ENCODE measurements at regions of chr22 and their contacts with region 1.

Region 1: DNA sequence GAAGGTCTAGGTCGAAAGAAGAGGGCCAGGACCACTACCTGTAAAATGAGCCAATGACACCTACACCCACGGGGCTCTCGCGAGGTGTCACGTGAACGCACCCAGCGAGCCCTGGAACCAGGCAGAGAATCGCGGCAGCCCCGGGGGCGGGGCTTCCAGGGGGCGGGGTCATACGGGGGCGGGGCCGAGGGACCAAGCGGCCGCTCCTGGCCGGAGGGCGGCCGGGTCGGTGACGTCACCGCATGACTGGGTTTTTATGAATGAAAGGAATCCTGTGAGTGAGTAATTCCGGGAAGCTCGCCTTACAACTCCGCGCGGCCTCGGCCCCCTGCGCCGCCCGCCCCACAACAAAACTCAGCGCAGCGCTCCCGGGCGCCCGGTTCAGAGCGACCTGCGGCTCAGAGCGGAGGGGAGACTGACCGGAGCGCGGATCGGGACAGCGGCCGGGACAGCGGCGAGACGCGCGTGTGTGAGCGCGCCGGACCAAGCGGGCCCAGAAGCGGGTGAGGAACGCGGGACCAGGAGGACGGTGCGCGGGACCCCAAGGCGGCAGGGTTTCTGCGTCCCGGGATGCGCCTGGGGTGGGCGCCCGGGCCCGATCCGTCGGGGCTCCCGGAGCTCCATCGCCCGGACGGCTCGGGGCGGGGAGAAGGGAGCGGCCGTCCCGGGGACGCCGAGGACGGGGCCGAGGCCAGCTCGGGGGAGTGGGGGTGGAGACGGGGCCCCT is at the start of gene MAFF:
- DNase-seq: peak; percentile 69
- ATAC-seq: peak; percentile 64
- H3K4me3 ChIP-seq: peak within 1 kb of the TSS; percentile 78
- H3K27ac ChIP-seq: peak within 1 kb of the TSS; percentile 47; the same call in 1 of the 2 replicates
- H3K4me1 ChIP-seq: peaks cover 42% of the 10 kb centered on the region
- H3K27me3 ChIP-seq: no peaks in the 10 kb centered on the region
- CTCF ChIP-seq: no peak
- EP300 ChIP-seq: no peak
- POLR2A ChIP-seq: no peak
- RAD21 ChIP-seq: no peak
- polyA plus RNA-seq, gene MAFF: 0.22 TPM in 1 of 2 experiments, not detected in the other

Region 2: GRCh38 chr22:37982938-37983859 is 218.7 kb before region 1 on chr22:
- CTCF ChIA-PET with region 1: no interaction called
- POLR2A ChIA-PET with region 1: no interaction called
- RAD21 ChIA-PET with region 1: no interaction called
- SMC1A ChIA-PET with region 1: no interaction called
- in situ Hi-C with region 1: no loop called
- intact Hi-C with region 1: no loop called
- DNase-seq: no peak
- ATAC-seq: no peak
- H3K4me3 ChIP-seq: no peak overlapping the region
- H3K27ac ChIP-seq: no peak overlapping the region
- H3K4me1 ChIP-seq: no peaks in the 10 kb centered on the region
- H3K27me3 ChIP-seq: no peaks in the 10 kb centered on the region
- CTCF ChIP-seq: no peak
- EP300 ChIP-seq: no peak
- POLR2A ChIP-seq: no peak
- RAD21 ChIP-seq: no peak

Region 3: DNA sequence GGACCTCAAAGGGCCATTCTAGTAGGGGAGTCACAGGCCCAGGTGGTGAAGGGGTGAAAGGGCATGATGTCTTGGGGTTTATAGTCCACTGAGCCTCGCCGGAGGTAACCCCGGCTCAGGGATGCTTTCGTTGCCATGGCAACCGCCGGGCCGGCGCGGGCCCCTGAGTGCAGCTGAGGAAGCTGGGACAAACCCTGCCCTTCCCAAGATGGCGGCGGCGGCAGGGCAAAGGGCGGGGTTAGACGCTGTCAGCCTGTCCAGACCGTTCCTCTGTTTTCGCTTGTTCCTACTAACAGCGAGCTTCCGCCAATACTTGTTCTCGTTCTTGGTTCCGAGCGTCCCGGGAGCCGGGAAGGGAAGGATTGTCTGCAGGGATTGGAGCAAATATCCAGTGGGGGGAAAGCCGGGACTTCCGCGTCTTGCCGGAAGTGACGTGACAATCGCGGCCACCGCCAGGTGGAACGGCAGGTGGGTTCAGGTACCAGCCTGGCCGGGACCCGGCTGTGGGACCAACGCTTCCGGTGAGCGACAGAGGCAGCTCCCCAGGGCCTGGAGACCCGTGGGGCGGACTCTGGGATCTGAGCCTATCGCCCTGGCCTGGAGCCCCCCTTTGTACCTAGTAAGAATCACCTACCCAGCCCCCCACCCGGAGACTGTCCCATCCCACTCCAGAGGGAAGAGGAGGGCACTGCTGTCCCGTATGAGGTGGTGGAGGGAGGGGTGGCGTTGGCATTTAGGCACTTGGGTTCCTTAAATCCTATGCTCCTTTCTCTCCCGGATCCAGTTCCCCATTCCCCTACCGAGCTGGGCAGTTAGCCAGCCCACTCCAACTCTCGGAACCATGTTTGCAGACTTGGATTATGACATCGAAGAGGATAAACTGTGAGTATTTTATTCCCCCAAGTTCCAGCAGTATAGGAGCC is 144.6 kb before region 1 on chr22 and contains the start of gene PICK1:
- CTCF ChIA-PET with region 1: interaction called, 3 read pairs
- POLR2A ChIA-PET with region 1: no interaction called
- RAD21 ChIA-PET with region 1: no interaction called
- SMC1A ChIA-PET with region 1: interaction called, 3 read pairs
- in situ Hi-C with region 1: no loop called
- intact Hi-C with region 1: loop called (anchors 5 kb)
- DNase-seq: peak; percentile 32
- ATAC-seq: peak; percentile 87
- H3K4me3 ChIP-seq: peak within 1 kb of the TSS; percentile 76
- H3K27ac ChIP-seq: peak within 1 kb of the TSS; percentile 94
- H3K4me1 ChIP-seq: 0 out of 2 replicates have a peak, but pooled peaks cover 3% of the 10 kb centered on the region
- H3K27me3 ChIP-seq: no peaks in the 10 kb centered on the region
- CTCF ChIP-seq: no peak
- EP300 ChIP-seq: no peak
- POLR2A ChIP-seq: peak; percentile 84
- RAD21 ChIP-seq: no peak
- polyA plus RNA-seq, gene PICK1: 0.07 to 0.84 TPM

Region 4: GRCh38 chr22:38165922-38166593 is 35.8 kb before region 1 on chr22:
- CTCF ChIA-PET with region 1: no interaction called
- POLR2A ChIA-PET with region 1: no interaction called
- RAD21 ChIA-PET with region 1: no interaction called
- SMC1A ChIA-PET with region 1: no interaction called
- in situ Hi-C with region 1: no loop called
- intact Hi-C with region 1: no loop called
- DNase-seq: no peak
- ATAC-seq: no peak
- H3K4me3 ChIP-seq: no peak overlapping the region
- H3K27ac ChIP-seq: no peak overlapping the region
- H3K4me1 ChIP-seq: peaks cover 20% of the 10 kb centered on the region
- H3K27me3 ChIP-seq: no peaks in the 10 kb centered on the region
- CTCF ChIP-seq: no peak
- EP300 ChIP-seq: no peak
- POLR2A ChIP-seq: no peak
- RAD21 ChIP-seq: no peak

Region 5: GRCh38 chr22:38176170-38176741 is 25.6 kb before region 1 on chr22:
- CTCF ChIA-PET with region 1: interaction called, 23 read pairs
- POLR2A ChIA-PET with region 1: interaction called, 69 read pairs
- RAD21 ChIA-PET with region 1: interaction called, 9 read pairs
- SMC1A ChIA-PET with region 1: interaction called, 9 read pairs
- in situ Hi-C with region 1: no loop called
- intact Hi-C with region 1: no loop called
- DNase-seq: peak; percentile 65
- ATAC-seq: peak; percentile 48
- H3K4me3 ChIP-seq: peak overlapping the region; percentile 34; the same call in 1 of the 2 replicates
- H3K27ac ChIP-seq: peak overlapping the region; percentile 87
- H3K4me1 ChIP-seq: peaks cover 52% of the 10 kb centered on the region
- H3K27me3 ChIP-seq: no peaks in the 10 kb centered on the region
- CTCF ChIP-seq: no peak
- EP300 ChIP-seq: peak; percentile 80 to 85
- POLR2A ChIP-seq: no peak
- RAD21 ChIP-seq: no peak

Region 6: DNA sequence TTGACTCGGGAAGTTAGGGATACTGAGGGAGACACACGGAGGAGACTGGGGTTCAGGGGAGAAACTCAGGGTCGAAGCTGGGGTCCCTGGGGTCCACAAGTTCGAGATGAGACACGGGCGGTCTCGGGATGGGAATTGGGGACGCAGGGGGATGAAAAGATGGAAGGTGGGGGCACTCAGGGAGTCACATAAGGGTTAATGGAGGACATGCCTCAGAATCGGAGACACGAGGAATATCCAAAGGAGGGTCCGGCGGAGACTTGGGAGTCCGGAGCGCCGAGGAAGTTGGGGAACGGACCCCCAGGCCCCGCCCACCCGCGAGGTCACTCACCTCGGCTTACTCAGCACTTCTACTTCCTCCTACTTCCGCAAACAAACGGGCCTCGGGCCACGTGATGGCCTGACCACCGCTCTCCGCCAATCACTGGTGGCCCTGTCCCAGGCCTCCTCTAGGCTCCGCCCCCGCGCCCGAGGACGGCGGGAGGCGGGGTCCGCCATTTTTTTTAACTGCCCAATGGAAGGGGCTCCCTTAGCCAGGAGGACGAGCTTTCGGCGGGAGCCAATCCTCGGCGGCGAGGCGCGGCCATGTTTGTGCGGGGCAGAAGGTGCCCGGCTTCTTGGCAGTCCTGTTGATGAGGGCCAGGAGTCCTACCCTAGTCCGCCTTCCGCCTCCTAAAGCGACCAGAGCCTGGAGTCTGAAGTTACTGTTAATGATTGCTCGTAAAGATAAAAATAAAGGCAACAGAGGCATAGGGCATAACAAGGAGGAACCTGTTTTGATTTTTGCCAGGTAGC is 20.2 kb before region 1 on chr22 and contains the start of gene PLA2G6:
- CTCF ChIA-PET with region 1: interaction called, 23 read pairs
- POLR2A ChIA-PET with region 1: interaction called, 69 read pairs
- RAD21 ChIA-PET with region 1: interaction called, 9 read pairs
- SMC1A ChIA-PET with region 1: interaction called, 9 read pairs
- in situ Hi-C with region 1: no loop called
- intact Hi-C with region 1: no loop called
- DNase-seq: peak; percentile 95
- ATAC-seq: peak; percentile 85
- H3K4me3 ChIP-seq: peak within 1 kb of the TSS; percentile 89
- H3K27ac ChIP-seq: peak within 1 kb of the TSS; percentile 100
- H3K4me1 ChIP-seq: peaks cover 39% of the 10 kb centered on the region
- H3K27me3 ChIP-seq: no peaks in the 10 kb centered on the region
- CTCF ChIP-seq: no peak
- EP300 ChIP-seq: no peak
- POLR2A ChIP-seq: peak; percentile 49; the same call in 1 of the 2 replicates
- RAD21 ChIP-seq: no peak
- polyA plus RNA-seq, gene PLA2G6: 0.15 to 0.27 TPM

Region 7: DNA sequence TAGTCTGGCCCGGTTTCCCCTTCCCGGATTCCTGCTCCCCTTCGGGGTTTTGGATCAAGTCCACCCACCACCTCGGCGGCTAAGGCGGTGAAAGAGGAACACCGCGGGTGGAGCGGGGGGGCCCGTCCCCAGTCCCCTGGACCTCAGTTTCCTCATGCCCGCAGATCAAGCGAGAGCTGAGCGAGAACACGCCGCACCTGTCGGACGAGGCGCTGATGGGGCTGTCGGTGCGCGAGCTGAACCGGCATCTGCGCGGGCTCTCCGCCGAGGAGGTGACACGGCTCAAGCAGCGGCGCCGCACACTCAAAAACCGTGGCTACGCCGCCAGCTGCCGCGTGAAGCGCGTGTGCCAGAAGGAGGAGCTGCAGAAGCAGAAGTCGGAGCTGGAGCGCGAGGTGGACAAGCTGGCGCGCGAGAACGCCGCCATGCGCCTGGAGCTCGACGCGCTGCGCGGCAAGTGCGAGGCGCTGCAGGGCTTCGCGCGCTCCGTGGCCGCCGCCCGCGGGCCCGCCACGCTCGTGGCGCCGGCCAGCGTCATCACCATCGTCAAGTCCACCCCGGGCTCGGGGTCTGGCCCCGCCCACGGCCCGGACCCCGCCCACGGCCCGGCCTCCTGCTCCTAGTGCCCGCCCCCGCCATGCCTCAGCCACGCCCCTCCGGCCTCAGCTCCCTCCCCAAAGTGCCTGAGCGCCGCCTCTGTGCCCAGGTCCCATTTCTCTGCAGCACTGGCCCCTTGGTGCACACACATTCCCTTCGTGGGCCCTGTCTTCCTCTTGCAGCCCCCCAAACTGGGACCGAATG is 12.6 kb after region 1 on chr22:
- CTCF ChIA-PET with region 1: interaction called, 3 read pairs
- POLR2A ChIA-PET with region 1: interaction called, 10 read pairs
- RAD21 ChIA-PET with region 1: interaction called, 13 read pairs
- SMC1A ChIA-PET with region 1: interaction called, 20 read pairs
- in situ Hi-C with region 1: no loop called
- intact Hi-C with region 1: no loop called
- DNase-seq: no peak
- ATAC-seq: peak; percentile 76
- H3K4me3 ChIP-seq: peak overlapping the region; percentile 58
- H3K27ac ChIP-seq: peak overlapping the region; percentile 5; the same call in 1 of the 2 replicates
- H3K4me1 ChIP-seq: peaks cover 46% of the 10 kb centered on the region
- H3K27me3 ChIP-seq: no peaks in the 10 kb centered on the region
- CTCF ChIP-seq: peak in 1 of 3 experiments; percentile 10; a peak in 2 of 6 replicates
- EP300 ChIP-seq: no peak
- POLR2A ChIP-seq: peak; percentile 55; the same call in 1 of the 2 replicates
- RAD21 ChIP-seq: no peak

Region 8: GRCh38 chr22:38398609-38399461 is 197.0 kb after region 1 on chr22:
- CTCF ChIA-PET with region 1: no interaction called
- POLR2A ChIA-PET with region 1: no interaction called
- RAD21 ChIA-PET with region 1: no interaction called
- SMC1A ChIA-PET with region 1: no interaction called
- in situ Hi-C with region 1: no loop called
- intact Hi-C with region 1: loop called (anchors 5 kb)
- DNase-seq: no peak
- ATAC-seq: peak; percentile 77
- H3K4me3 ChIP-seq: peak overlapping the region; percentile 91
- H3K27ac ChIP-seq: peak overlapping the region; percentile 85
- H3K4me1 ChIP-seq: no peaks in the 10 kb centered on the region
- H3K27me3 ChIP-seq: no peaks in the 10 kb centered on the region; a peak in 1 of 4 replicates
- CTCF ChIP-seq: no peak
- EP300 ChIP-seq: no peak
- POLR2A ChIP-seq: peak; percentile 75
- RAD21 ChIP-seq: no peak